Endothelial cell of umbilical vein (primary cell): ENCODE measurements at regions of chr2 and their contacts with region 1.

Region 1: GRCh38 chr2:127106951-127107621 is at the start of gene BIN1:
- DNase-seq: peak; percentile 93
- H3K4me3 ChIP-seq: peak within 1 kb of the TSS; percentile 68 to 92 (median 78)
- H3K27ac ChIP-seq: peak within 1 kb of the TSS; percentile 68
- H3K4me1 ChIP-seq: peaks cover 6% of the 10 kb centered on the region
- H3K27me3 ChIP-seq: peaks cover 5 to 13% of the 10 kb centered on the region in 2 experiments
- CTCF ChIP-seq: no peak
- POLR2A ChIP-seq: peak; percentile 17
- total RNA-seq, gene BIN1: 36.9 and 41.1 TPM in 2 replicates

Region 2: DNA sequence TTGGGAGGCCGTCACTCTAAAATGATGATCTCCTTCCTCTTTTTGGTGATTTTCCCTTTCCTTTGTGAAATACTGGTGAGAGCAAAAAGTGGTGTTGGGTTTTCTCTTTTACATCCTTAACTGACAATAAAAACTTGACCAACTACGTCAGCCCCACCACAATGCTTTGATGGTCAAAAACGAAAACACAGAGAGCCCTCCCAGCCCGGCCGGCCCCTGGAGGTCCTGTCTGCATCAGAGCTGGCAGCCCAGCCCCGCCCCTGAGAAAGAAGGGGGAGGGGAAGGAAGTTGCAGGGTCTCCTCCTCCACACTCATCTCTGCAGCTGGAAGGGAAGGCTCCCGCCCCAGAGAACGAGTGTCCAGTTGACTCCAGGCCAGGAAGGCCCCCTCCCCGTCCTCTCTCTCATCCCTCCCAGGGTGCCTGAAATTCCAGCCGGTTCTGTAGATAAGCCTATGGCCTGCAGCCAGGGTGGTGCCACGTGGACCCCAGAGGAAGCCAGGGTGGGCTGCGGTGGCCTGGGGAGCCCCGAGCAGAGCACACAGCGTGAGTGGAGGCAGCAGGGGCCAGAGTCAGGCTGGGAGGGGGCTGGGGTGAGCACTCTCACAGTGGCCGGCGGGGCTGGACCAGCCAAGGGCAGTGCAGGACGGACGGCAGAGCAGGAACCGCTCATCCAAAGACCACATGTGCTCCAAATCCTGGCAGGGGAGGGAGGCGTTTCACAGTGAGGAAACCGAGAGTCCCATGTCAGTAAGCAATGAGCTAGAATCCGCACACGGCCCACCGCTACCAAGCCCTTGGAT is 19.9 kb before region 1 on chr2:
- CTCF ChIA-PET with region 1: interaction called, 8 read pairs
- POLR2A ChIA-PET with region 1: no interaction called
- dilution Hi-C with region 1: no loop called
- intact Hi-C with region 1: loop called (anchors 1 kb)
- DNase-seq: peak; percentile 75
- H3K4me3 ChIP-seq: no peak overlapping the region
- H3K27ac ChIP-seq: peak overlapping the region; percentile 29
- H3K4me1 ChIP-seq: peaks cover 26% of the 10 kb centered on the region
- H3K27me3 ChIP-seq: no peaks in the 10 kb centered on the region
- CTCF ChIP-seq: no peak
- POLR2A ChIP-seq: no peak

Region 3: DNA sequence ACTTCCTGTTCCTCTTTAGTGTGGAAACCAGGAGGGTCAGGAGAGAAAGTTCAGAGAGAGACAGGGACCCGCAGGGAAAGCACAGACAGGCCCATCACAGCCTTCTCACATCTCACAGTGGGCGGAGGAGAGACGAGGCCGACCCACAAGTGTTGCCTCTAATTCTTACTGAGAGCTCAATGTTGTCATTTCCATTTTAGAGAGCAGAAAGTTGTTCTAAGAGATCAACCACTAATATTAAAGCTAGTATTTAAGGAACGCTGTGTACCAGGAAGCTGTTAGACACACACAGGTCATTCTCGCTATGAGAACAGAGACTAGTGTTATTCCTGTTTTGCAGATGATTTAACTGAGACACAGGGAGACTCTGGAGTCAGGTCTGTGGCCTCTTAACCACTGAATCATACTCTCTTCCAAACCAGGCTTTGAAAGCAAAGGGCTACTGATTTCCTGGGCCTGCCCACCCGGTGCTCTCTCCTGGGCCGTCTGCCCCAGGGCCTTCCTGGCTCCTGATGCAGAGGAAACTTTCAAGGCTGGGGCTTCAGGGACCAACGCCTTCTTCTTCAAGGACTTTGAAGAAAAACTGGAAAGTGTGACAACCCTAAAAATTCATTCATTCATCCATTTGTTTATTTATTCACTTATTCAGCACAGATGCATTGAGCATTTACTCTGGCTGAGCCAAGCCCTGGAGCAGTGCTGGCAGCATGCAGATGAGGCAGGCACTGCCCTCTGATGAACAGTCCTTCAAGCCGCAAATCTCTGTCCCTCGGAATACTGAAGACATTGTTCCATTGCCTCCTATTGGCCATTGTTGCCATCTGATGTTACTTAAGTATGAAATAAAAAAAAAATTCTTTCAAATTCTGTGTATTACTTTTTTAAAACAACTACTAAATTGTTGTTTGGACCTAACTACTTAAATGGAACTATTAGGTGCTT is 37.0 kb after region 1 on chr2:
- CTCF ChIA-PET with region 1: interaction called, 6 read pairs
- POLR2A ChIA-PET with region 1: interaction called, 4 read pairs
- dilution Hi-C with region 1: no loop called
- intact Hi-C with region 1: loop called (anchors 2 kb)
- DNase-seq: peak; percentile 32
- H3K4me3 ChIP-seq: no peak overlapping the region
- H3K27ac ChIP-seq: peak overlapping the region; percentile 24
- H3K4me1 ChIP-seq: peaks cover 24% of the 10 kb centered on the region
- H3K27me3 ChIP-seq: peaks cover 0 to 7% of the 10 kb centered on the region in 2 experiments
- CTCF ChIP-seq: no peak
- POLR2A ChIP-seq: no peak

Region 4: GRCh38 chr2:127174136-127174535 is 67.0 kb after region 1 on chr2:
- CTCF ChIA-PET with region 1: interaction called, 22 read pairs
- POLR2A ChIA-PET with region 1: no interaction called
- dilution Hi-C with region 1: no loop called
- intact Hi-C with region 1: no loop called
- DNase-seq: no peak
- H3K4me3 ChIP-seq: no peak overlapping the region
- H3K27ac ChIP-seq: no peak overlapping the region
- H3K4me1 ChIP-seq: no peaks in the 10 kb centered on the region
- H3K27me3 ChIP-seq: no peaks in the 10 kb centered on the region
- CTCF ChIP-seq: peak; percentile 8 to 60
- POLR2A ChIP-seq: no peak

Region 5: DNA sequence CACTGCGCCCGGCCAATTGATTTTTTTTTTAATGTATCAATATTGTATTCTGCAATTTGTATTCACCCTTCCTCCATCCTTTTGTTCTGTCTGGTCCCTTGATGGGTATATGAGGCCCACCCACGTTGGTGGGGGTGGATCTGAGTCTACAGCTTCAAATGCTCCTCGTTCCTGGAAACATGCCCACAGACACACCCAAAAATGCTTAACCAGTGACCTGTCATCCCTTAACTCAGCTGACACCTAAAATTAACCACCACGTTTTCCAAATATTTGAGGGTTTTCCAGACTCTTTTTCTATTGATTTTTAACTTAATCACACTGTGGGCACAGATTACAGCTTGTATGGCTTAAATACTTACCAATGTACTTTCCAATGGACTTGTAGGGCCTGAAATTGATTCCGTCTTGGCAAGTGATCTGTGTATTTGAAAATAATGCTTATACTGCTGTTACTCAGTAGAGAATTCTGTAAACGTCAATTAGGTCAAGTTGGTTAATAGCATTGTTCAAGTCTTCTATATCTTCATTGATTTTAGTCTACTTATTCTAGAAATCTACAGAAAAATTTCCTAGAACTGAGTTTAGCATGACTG is 147.4 kb after region 1 on chr2:
- CTCF ChIA-PET with region 1: no interaction called
- POLR2A ChIA-PET with region 1: no interaction called
- dilution Hi-C with region 1: no loop called
- intact Hi-C with region 1: no loop called
- DNase-seq: no peak
- H3K4me3 ChIP-seq: no peak overlapping the region
- H3K27ac ChIP-seq: no peak overlapping the region
- H3K4me1 ChIP-seq: no peaks in the 10 kb centered on the region
- H3K27me3 ChIP-seq: no peaks in the 10 kb centered on the region
- CTCF ChIP-seq: no peak
- POLR2A ChIP-seq: no peak

Region 6: DNA sequence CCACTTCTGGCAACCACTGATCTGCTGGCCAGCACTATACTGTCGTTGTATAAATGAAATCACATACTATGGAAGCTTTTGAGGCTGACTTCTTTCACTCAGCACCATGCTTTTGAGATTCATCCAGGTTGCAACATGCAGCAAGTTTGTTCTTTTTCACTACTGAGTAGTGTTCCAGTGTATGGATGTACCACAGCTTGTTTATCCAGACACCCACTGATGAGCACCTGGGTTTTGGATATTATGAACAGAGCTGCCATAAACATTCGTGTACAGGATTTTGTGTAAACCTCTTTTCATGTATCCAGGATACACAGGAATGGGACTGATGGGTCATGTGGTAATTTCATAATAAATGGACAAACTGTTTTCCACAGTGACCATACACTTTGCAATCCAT is 176.2 kb after region 1 on chr2:
- CTCF ChIA-PET with region 1: no interaction called
- POLR2A ChIA-PET with region 1: no interaction called
- dilution Hi-C with region 1: no loop called
- intact Hi-C with region 1: no loop called
- DNase-seq: no peak
- H3K4me3 ChIP-seq: no peak overlapping the region
- H3K27ac ChIP-seq: no peak overlapping the region
- H3K4me1 ChIP-seq: no peaks in the 10 kb centered on the region
- H3K27me3 ChIP-seq: no peaks in the 10 kb centered on the region
- CTCF ChIP-seq: no peak
- POLR2A ChIP-seq: no peak